ENCODE measurements at regions of chr1 and their contacts with region 1.

Region 1: GRCh38 chr1:6784560-6785317 is 515 bp upstream of the CAMTA1 start:
- DNase-seq: peak; percentile 100
- H3K4me3 ChIP-seq: peak overlapping the region; percentile 75 to 87 (median 85)
- H3K4me3 Mint-ChIP-seq: peak overlapping the region; percentile 85 to 93
- H3K27ac ChIP-seq: peak overlapping the region; percentile 97 to 98
- H3K27ac Mint-ChIP-seq: peak overlapping the region; percentile 93 to 98 (median 97)
- H3K4me1 ChIP-seq: peaks cover 25 to 29% of the 10 kb centered on the region in 2 donors
- H3K4me1 Mint-ChIP-seq: peaks cover 49% of the 10 kb centered on the region
- H3K27me3 ChIP-seq: no peaks in the 10 kb centered on the region
- H3K27me3 Mint-ChIP-seq: peaks cover 0 to 3% (median 0%) of the 10 kb centered on the region in 3 donors
- CTCF ChIP-seq: no peak

Region 2: DNA sequence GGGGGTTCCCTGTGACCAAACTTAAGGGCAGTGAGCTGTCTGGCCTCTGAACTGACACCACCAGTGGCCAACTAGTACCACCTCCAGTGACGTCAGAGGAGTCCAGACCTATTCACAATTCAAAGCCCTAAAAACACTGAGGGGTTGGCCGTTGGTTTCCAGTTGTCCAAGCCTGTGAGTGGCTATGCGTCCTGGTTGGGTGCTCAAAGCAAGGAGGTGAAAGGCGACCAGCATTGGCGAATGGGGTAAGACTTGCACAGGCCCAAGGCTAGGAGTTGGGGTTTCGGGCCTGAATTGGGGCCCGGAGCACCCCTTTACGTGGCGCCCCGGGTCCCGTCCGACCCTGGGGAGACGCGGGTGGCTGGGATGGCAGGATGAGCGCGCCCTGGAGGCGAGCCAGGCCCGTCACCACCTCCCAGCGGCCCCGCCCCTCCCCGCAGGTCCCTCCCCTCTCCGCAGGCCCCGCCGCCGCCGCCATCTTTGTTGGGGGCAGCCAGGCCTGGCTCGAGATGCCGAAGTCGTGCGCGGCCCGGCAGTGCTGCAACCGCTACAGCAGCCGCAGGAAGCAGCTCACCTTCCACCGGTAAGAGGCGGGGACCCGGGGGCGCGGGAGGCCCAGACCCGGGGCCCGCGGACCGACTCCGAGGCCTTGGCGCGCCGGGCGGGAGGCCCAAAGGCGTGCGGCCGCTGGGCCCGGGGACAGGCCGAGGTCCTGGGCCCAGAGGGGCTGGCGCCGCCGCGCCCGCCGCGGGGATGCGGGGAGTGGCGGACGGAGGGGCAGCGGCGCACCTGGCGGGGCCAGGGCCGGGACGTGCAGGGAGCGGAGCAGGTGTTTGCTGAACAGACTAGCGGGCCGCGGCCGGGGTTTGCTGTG is 159.8 kb before region 1 on chr1 and contains the start of gene THAP3:
- intact Hi-C with region 1: loop called in 1 of 2 experiments (anchors 10 kb)
- DNase-seq: peak; percentile 77 to 92 (median 78)
- H3K4me3 ChIP-seq: peak within 1 kb of the TSS; percentile 57 to 84 (median 62)
- H3K4me3 Mint-ChIP-seq: peak within 1 kb of the TSS; percentile 83 to 93
- H3K27ac ChIP-seq: peak within 1 kb of the TSS in 1 of 2 donors; percentile 73
- H3K27ac Mint-ChIP-seq: peak within 1 kb of the TSS; percentile 48 to 90 (median 85)
- H3K4me1 ChIP-seq: peaks cover 14 to 17% of the 10 kb centered on the region in 2 donors
- H3K4me1 Mint-ChIP-seq: peaks cover 20% of the 10 kb centered on the region
- H3K27me3 ChIP-seq: no peaks in the 10 kb centered on the region
- H3K27me3 Mint-ChIP-seq: peaks cover 0 to 2% (median 0%) of the 10 kb centered on the region in 3 donors
- CTCF ChIP-seq: peak; percentile 31
- polyA plus RNA-seq, gene THAP3: 10.3 to 12.8 (median 10.3) TPM

Region 3: DNA sequence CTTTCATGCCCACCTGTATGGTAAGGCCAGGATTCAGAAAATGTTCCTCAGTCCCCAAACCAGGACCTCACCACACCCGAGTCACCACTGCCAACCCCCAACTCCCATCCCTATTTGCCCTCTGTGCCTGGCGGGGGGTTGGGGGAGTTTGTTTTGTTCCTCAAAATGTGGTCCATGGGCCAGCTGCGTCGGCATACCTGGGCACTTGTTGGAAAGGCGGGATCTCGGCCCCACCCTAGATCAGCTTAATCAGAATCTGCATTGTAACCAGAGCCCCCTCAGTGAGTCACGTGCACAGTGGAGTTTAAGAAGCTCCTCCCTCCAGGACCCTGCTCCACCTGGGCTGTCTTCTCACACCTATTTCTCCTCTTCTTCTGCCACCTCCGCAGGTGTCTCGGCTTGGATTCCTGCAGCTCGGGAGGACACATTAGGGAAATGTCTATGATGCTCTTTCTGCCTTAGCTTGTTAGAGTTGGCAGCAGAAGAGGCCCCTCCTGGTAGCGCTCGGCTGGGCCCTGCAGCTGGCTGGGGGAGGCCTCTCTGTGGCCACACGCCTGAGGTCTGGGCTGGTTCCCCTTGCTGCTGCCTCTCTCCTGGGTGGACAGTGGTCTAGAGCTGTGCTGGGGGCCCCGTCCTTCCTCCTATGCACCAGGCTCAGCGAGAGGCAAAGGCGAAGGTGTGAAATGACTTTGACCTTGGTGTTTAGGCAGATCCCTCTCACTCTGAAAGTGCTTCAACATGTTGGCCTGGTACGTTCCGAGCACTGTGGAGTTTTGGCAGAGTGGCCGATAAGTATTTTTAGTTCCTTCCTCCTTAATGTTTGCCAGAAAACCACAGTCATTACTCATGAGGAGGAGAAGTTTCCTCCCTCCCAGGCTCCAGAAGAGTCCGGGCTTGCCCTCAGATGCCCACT is 41.3 kb before region 1 on chr1:
- intact Hi-C with region 1: loop called (anchors 5 kb)
- DNase-seq: peak; percentile 63 to 78 (median 76)
- H3K4me3 ChIP-seq: peak overlapping the region in 2 of 3 experiments; percentile 22 to 63
- H3K4me3 Mint-ChIP-seq: peak overlapping the region; percentile 65 to 80
- H3K27ac ChIP-seq: peak overlapping the region; percentile 87 to 90
- H3K27ac Mint-ChIP-seq: peak overlapping the region; percentile 88 to 97 (median 93)
- H3K4me1 ChIP-seq: peaks cover 51 to 55% of the 10 kb centered on the region in 2 donors
- H3K4me1 Mint-ChIP-seq: peaks cover 45% of the 10 kb centered on the region
- H3K27me3 ChIP-seq: no peaks in the 10 kb centered on the region
- H3K27me3 Mint-ChIP-seq: peaks cover 0 to 5% (median 0%) of the 10 kb centered on the region in 3 donors
- CTCF ChIP-seq: no peak